ENCODE measurements at regions of chr12 and their contacts with region 1.

Region 1: GRCh38 chr12:96054244-96054610 is 18.8 kb upstream of the LTA4H start:
- DNase-seq: no peak

Region 2: GRCh38 chr12:96489103-96490056 is 435.2 kb after region 1 on chr12 and contains the start of gene CFAP54:
- intact Hi-C with region 1: loop called in 1 of 2 experiments (anchors 10 kb)
- DNase-seq: peak; percentile 98
- total RNA-seq, gene CFAP54: 0.90 to 1.2 TPM